ENCODE measurements at regions of chr6 and their contacts with region 1.

Region 1: DNA sequence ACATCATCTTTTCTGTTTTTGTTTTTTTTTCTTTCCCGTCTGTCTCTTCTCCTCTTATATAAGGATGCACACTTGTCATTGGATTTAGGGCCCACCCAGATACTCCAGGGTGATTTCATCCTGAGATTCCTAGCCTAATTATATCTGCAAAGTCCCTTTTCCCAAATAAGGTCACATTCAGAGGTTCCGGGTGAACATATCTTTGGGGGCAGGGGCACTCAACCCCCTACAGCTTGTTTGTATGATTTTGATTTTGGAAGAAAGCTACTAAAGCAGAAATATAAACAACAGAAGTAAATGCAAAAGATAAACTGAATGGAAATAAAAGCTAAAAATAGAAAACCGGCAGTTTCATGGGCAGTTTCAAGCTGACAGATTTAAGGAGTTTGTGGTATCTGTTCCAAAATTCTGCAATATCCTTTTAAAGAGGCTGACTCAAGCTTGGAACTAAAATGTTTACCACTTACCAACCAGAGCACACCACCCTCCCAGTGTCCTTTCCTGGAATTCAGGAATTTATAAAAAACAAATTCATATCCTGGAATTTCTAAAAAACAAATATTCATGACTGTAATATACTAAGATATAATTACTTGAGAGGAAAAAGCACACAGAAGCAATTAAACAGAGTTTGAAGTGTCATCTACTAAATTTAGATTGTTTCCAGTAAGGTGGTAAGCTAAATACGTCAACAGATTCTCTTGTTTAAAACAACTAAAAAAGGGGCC is 100.0 kb upstream of the CARMIL1 start:
- DNase-seq: no peak
- H3K4me3 ChIP-seq: no peak overlapping the region
- H3K27ac ChIP-seq: peak overlapping the region; percentile 56 to 74
- H3K4me1 ChIP-seq: peaks cover 0 to 29% of the 10 kb centered on the region in 2 donors
- H3K27me3 ChIP-seq: no peaks in the 10 kb centered on the region
- CTCF ChIP-seq: no peak

Region 2: DNA sequence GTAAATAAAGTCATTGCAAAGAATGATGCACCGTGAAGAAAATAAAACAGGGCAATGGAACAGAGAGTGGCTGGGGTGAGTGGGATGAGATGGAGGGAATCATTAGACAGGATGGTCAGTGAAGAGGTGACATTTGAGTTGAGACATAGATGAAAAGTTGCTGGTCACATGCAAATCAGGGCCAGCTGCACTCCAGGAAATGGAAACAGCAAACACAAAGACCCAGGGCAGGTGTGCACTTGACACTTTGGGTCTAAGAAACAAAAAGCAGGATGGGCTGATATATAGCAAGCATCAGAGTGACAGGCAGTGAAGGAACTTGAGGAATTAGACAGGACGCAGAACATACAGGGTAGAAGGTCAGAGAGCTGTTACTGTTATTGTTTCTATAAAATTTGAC is 72.0 kb before region 1 on chr6:
- intact Hi-C with region 1: no loop called
- DNase-seq: no peak
- H3K4me3 ChIP-seq: no peak overlapping the region
- H3K27ac ChIP-seq: no peak overlapping the region
- H3K4me1 ChIP-seq: no peaks in the 10 kb centered on the region
- H3K27me3 ChIP-seq: no peaks in the 10 kb centered on the region
- CTCF ChIP-seq: no peak

Region 3: DNA sequence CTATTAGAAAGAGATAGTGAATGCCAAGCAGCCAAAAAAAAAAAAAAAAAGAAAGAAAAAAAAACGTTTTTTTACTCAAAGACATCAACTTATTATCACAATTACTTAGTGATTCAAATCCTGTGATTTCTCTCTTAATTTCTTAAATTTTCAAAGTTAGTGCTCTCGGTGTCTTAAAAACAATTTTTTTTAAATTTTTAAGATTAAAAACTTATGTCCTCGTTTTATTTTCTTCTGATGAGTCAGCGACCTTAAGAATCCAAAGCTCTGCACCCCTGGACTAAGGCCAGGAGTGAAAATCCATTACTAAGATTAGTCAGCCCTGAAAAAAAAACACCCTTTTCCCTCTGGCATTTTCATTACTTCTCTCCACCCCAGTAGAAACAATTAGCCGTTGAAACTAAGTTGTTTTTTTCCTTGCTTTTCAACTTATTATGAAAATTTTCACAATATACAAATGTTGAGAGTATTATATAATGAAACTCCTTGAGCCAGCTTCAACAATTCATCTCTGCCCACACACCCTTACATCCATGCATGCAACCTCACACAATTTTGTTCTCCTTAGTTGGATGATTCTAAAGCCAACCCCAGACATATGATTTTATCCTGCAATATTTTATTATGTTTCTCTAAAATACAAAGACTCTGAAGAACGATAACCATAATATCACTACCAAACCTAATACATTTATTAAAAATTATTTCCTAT is 14.4 kb after region 1 on chr6:
- intact Hi-C with region 1: loop called (anchors 2 kb)
- DNase-seq: no peak
- H3K4me3 ChIP-seq: no peak overlapping the region
- H3K27ac ChIP-seq: peak overlapping the region; percentile 87 to 88
- H3K4me1 ChIP-seq: peaks cover 12 to 24% of the 10 kb centered on the region in 2 donors
- H3K27me3 ChIP-seq: no peaks in the 10 kb centered on the region
- CTCF ChIP-seq: no peak